Activated naive CD4-positive, alpha-beta T cell treated with anti-CD3 and anti-CD28 coated beads for 36 hours (primary cell): ENCODE measurements at regions of chr2 and their contacts with region 1.

Region 1: GRCh38 chr2:199985625-199986207 is 30.3 kb downstream of the MAIP1 start:
- DNase-seq: peak; percentile 82
- H3K4me3 Mint-ChIP-seq: no peak overlapping the region
- H3K27ac Mint-ChIP-seq: no peak overlapping the region
- H3K4me1 Mint-ChIP-seq: no peaks in the 10 kb centered on the region
- H3K27me3 Mint-ChIP-seq: no peaks in the 10 kb centered on the region

Region 2: GRCh38 chr2:199973703-199974102 is 12.0 kb before region 1 on chr2:
- CTCF ChIA-PET with region 1: interaction called, 26 read pairs
- intact Hi-C with region 1: no loop called
- DNase-seq: no peak
- H3K4me3 Mint-ChIP-seq: no peak overlapping the region
- H3K27ac Mint-ChIP-seq: no peak overlapping the region
- H3K4me1 Mint-ChIP-seq: peaks cover 14% of the 10 kb centered on the region
- H3K27me3 Mint-ChIP-seq: no peaks in the 10 kb centered on the region

Region 3: GRCh38 chr2:200306196-200306930 is 320.6 kb after region 1 on chr2 and contains the start of gene SPATS2L:
- CTCF ChIA-PET with region 1: no interaction called
- intact Hi-C with region 1: loop called (anchors 5 kb)
- DNase-seq: peak; percentile 64
- H3K4me3 Mint-ChIP-seq: peak within 1 kb of the TSS; percentile 85
- H3K27ac Mint-ChIP-seq: peak within 1 kb of the TSS; percentile 4
- H3K4me1 Mint-ChIP-seq: peaks cover 13% of the 10 kb centered on the region
- H3K27me3 Mint-ChIP-seq: peaks cover 15% of the 10 kb centered on the region
- total RNA-seq, gene SPATS2L: 8.9 to 10.9 TPM

Region 4: DNA sequence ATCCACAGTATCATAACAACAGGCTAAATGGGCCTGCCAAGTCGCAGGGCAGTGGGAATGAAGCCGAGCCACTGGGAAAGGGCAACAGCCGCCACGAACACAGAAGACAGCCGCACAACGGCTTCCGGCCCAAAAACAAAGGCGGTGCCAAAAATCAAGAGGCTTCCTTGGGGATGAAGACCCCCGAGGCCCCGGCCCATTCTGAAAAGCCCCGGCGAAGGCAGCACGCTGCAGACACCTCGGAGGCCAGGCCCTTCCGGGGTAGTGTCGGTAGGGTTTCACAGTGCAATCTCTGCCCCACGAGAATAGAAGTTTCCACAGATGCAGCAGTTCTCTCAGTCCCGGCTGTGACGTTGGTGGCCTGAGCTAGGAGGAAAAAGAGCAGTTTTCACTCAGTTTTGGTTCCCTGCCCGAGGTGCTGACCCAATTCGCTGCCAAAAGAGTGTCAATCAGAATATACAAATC is 492.0 kb after region 1 on chr2:
- CTCF ChIA-PET with region 1: interaction called, 43 read pairs
- intact Hi-C with region 1: loop called (anchors 1 kb)
- DNase-seq: no peak
- H3K4me3 Mint-ChIP-seq: no peak overlapping the region
- H3K27ac Mint-ChIP-seq: no peak overlapping the region
- H3K4me1 Mint-ChIP-seq: peaks cover 2% of the 10 kb centered on the region
- H3K27me3 Mint-ChIP-seq: no peaks in the 10 kb centered on the region

Region 5: DNA sequence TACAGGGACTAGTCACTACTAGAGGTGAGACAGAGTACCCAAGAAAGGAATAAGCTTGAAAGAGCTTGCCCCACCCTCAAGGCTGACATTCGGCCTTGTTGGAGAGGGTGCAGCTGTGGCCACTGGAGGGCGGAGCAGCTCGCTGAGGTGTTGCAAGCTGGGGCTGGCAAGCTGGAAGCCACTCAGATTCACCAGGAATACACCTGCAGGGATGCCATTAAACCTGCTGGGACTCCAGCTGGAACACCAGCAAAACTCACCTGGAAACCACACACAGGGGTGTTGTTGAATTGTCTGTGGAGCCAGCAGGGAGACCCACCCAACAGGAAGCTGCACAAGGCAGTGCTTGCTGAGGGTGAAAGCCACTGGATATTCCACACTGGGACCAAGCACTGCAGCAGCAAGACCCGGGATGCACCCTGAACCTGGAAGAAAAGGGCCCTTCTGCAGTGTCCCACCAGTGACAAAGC is 498.0 kb after region 1 on chr2:
- CTCF ChIA-PET with region 1: interaction called, 43 read pairs
- intact Hi-C with region 1: loop called (anchors 1 kb)
- DNase-seq: peak; percentile 67
- H3K4me3 Mint-ChIP-seq: no peak overlapping the region
- H3K27ac Mint-ChIP-seq: no peak overlapping the region
- H3K4me1 Mint-ChIP-seq: peaks cover 2% of the 10 kb centered on the region
- H3K27me3 Mint-ChIP-seq: no peaks in the 10 kb centered on the region

Region 6: GRCh38 chr2:200728630-200729029 is 742.9 kb after region 1 on chr2:
- CTCF ChIA-PET with region 1: no interaction called
- intact Hi-C with region 1: no loop called
- DNase-seq: no peak
- H3K4me3 Mint-ChIP-seq: no peak overlapping the region
- H3K27ac Mint-ChIP-seq: no peak overlapping the region
- H3K4me1 Mint-ChIP-seq: no peaks in the 10 kb centered on the region
- H3K27me3 Mint-ChIP-seq: peaks cover 6% of the 10 kb centered on the region